ENCODE measurements at regions of chr10 and their contacts with region 1.

Region 1: DNA sequence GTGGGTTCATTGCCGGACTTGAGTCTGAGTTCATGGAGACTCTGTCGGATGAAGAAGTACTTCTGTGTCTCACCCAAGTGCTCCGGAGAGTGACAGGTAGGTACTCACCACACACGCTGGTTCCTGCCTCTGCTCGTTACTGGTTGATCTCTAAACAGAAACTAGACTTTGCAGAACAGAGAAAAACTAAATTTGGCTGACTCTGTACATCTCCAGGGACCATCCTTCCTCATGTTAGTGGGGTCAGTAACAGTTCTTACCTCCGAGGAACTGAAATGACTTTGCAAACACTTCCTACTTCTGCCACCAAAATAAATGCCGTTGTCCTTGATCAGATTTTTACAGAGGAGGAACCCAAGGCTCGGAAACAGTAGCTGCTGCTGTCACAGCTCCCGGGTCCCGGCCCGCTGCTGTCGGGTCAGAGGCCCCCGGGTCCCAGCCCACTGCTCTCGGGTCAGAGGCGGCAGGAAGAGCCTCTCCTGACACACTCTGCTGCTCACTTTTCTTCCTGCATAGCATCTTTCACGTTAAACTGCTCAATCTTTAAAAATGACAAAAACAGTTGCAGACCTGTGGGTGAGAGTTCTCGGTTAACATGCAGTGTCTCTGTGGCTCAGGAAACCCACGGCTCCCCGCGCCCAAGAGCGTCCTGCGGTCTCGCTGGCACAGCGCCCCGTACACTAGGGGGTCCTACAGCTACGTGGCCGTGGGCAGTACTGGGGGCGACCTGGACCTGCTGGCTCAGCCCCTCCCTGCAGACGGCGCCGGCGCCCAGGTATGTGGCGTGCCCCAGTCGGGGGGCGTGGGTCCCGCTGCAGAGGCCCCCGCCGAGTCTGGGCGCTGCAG is 4.8 kb upstream of the MTG1 start:
- DNase-seq: peak; percentile 68
- H3K4me3 Mint-ChIP-seq: peak overlapping the region; percentile 70
- H3K27ac Mint-ChIP-seq: peak overlapping the region; percentile 98
- H3K4me1 Mint-ChIP-seq: peaks cover 49% of the 10 kb centered on the region
- H3K27me3 Mint-ChIP-seq: no peaks in the 10 kb centered on the region

Region 2: GRCh38 chr10:133329491-133330202 is 59.5 kb before region 1 on chr10:
- CTCF ChIA-PET with region 1: interaction called, 18 read pairs
- POLR2A ChIA-PET with region 1: interaction called, 8 read pairs
- DNase-seq: peak; percentile 85
- H3K4me3 Mint-ChIP-seq: no peak overlapping the region
- H3K27ac Mint-ChIP-seq: no peak overlapping the region
- H3K4me1 Mint-ChIP-seq: peaks cover 11% of the 10 kb centered on the region
- H3K27me3 Mint-ChIP-seq: peaks cover 68% of the 10 kb centered on the region

Region 3: DNA sequence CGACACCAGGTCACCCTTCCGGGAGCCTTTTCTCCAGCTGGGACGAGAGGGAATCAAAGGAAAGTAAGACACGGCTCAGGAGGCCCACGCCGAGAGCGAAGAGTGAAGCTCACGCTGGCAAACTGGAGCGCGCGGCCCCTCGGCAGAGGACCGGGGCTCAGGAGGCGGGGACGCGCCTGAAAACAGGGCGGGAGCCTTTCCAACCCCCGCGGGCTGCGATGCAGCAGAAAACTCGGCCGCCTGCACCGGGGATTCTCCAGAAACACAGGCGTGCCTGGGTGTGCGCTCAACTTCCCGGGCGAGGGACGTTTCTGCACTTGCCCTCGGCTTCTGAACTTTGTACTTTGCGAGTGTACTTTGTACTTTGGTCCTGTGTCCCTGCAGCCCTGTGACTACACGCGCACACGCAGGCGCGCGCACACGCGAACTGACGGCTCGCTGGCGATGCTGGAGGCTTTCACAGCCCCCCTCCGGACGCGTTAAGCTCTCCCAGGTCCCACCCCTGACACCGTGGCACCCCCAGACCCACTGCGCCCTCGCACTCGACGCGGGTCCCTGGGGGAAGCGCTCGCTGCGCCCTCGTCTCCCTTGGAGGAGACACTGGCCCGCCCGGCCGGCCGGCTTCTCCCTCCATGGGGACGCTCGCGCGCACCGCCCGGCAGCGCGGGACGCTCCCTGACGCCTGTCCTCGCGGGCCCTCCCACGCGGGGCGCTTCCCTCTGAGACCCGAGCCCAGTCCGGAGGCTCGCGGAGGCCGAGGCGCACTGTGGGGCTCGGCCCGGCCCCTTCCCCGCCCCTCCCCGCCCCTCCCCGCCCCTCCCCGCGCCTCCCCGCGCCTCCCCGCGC is 10.7 kb before region 1 on chr10:
- CTCF ChIA-PET with region 1: interaction called, 4 read pairs
- POLR2A ChIA-PET with region 1: interaction called, 68 read pairs
- DNase-seq: peak; percentile 63
- H3K4me3 Mint-ChIP-seq: peak overlapping the region; percentile 77
- H3K27ac Mint-ChIP-seq: peak overlapping the region; percentile 35
- H3K4me1 Mint-ChIP-seq: peaks cover 18% of the 10 kb centered on the region
- H3K27me3 Mint-ChIP-seq: peaks cover 8% of the 10 kb centered on the region

Region 4: GRCh38 chr10:133400624-133401424 is 11.6 kb after region 1 on chr10:
- CTCF ChIA-PET with region 1: interaction called, 4 read pairs
- POLR2A ChIA-PET with region 1: interaction called, 15 read pairs
- DNase-seq: no peak
- H3K4me3 Mint-ChIP-seq: no peak overlapping the region
- H3K27ac Mint-ChIP-seq: peak overlapping the region; percentile 80
- H3K4me1 Mint-ChIP-seq: peaks cover 62% of the 10 kb centered on the region
- H3K27me3 Mint-ChIP-seq: no peaks in the 10 kb centered on the region